PC-3 (cell line): ENCODE measurements at regions of chr3 and their contacts with region 1.

Region 1: GRCh38 chr3:124928333-124929202 is 6.0 kb downstream of the MUC13 start:
- DNase-seq: peak; percentile 79
- ATAC-seq: peak; percentile 67
- H3K4me3 ChIP-seq: no peak overlapping the region
- H3K27ac ChIP-seq: no peak overlapping the region
- H3K4me1 ChIP-seq: no peaks in the 10 kb centered on the region; the same call in 1 of the 2 replicates
- H3K27me3 ChIP-seq: no peaks in the 10 kb centered on the region
- CTCF ChIP-seq: peak; percentile 77

Region 2: GRCh38 chr3:124986158-124987143 is 57.9 kb after region 1 on chr3:
- CTCF ChIA-PET with region 1: no interaction called
- POLR2A ChIA-PET with region 1: no interaction called
- intact Hi-C with region 1: loop called (anchors 1 kb)
- DNase-seq: peak; percentile 89
- ATAC-seq: peak; percentile 73
- H3K4me3 ChIP-seq: no peak overlapping the region
- H3K27ac ChIP-seq: peak overlapping the region; percentile 77
- H3K4me1 ChIP-seq: peaks cover 25% of the 10 kb centered on the region
- H3K27me3 ChIP-seq: no peaks in the 10 kb centered on the region
- CTCF ChIP-seq: peak; percentile 78

Region 3: DNA sequence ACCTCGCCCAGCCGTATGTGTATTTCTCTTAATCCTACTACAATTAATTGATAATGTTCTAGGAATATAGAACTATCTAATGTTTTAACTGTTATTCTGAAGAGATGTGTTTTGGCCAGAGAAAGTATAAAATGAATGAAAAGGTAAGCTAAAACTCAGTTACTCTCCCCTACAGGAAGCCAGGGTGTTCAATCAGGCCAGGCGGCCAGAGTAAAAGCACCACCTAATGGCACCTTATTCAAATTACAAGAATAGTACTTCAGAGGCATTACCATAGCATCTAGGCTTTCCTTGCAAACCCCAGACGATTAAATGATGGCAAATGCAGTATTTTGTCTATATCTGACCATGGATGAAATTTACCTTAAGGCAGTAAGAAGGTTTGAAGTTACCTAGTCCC is 273.6 kb after region 1 on chr3:
- CTCF ChIA-PET with region 1: no interaction called
- POLR2A ChIA-PET with region 1: no interaction called
- intact Hi-C with region 1: loop called (anchors 5 kb)
- DNase-seq: peak; percentile 47
- ATAC-seq: peak; percentile 72
- H3K4me3 ChIP-seq: no peak overlapping the region
- H3K27ac ChIP-seq: no peak overlapping the region
- H3K4me1 ChIP-seq: no peaks in the 10 kb centered on the region
- H3K27me3 ChIP-seq: no peaks in the 10 kb centered on the region
- CTCF ChIP-seq: peak; percentile 58

Region 4: GRCh38 chr3:125437631-125438435 is 509.3 kb after region 1 on chr3:
- CTCF ChIA-PET with region 1: no interaction called
- POLR2A ChIA-PET with region 1: no interaction called
- intact Hi-C with region 1: loop called (anchors 10 kb)
- DNase-seq: peak; percentile 61
- ATAC-seq: peak; percentile 27; the same call in 1 of the 2 replicates
- H3K4me3 ChIP-seq: no peak overlapping the region
- H3K27ac ChIP-seq: no peak overlapping the region
- H3K4me1 ChIP-seq: peaks cover 14% of the 10 kb centered on the region
- H3K27me3 ChIP-seq: no peaks in the 10 kb centered on the region
- CTCF ChIP-seq: peak; percentile 89

Region 5: GRCh38 chr3:125585595-125586223 is 657.1 kb after region 1 on chr3:
- CTCF ChIA-PET with region 1: no interaction called
- POLR2A ChIA-PET with region 1: no interaction called
- intact Hi-C with region 1: loop called (anchors 1 kb)
- DNase-seq: peak; percentile 64
- ATAC-seq: peak; percentile 67
- H3K4me3 ChIP-seq: no peak overlapping the region
- H3K27ac ChIP-seq: no peak overlapping the region
- H3K4me1 ChIP-seq: no peaks in the 10 kb centered on the region; the same call in 1 of the 2 replicates
- H3K27me3 ChIP-seq: no peaks in the 10 kb centered on the region
- CTCF ChIP-seq: peak; percentile 78